ENCODE measurements at regions of chr11 and their contacts with region 1.

Region 1: GRCh38 chr11:118207079-118207478 is 17.7 kb downstream of the JAML start:
- DNase-seq: no peak
- H3K4me3 Mint-ChIP-seq: no peak overlapping the region
- H3K27ac Mint-ChIP-seq: peak overlapping the region; percentile 90
- H3K4me1 Mint-ChIP-seq: peaks cover 63% of the 10 kb centered on the region
- H3K27me3 Mint-ChIP-seq: no peaks in the 10 kb centered on the region

Region 2: DNA sequence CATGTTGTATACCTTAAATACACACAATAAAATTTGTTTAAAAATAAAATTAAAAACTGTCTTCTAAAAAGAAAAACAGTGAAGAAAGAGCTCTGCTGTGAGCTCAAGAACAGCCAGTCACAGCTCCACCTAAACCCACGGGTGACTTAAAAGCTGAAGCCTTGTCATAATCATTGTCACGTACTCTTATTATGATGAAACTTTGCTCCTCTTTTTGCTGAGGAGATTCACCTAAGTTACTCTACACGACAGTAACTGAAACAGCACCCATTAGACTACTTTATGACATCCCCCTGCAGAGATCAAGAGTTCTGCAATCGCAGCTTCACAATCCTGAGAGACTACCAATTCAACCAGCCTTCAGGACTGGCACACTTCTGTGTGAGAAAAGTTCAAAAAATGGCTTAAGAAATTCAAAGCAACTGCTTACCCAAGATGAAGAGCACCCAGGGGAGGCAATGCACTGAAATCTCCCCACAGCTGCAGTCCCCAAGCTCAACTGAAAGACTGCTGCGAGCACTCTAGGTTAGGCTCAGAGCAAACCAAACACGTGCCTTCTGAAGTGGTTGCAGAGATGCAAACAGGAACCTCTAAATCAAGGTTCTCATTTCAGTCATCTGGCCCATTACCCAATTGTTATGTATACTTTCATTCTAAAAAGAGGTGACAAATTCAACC is 17.6 kb after region 1 on chr11 and contains the start of gene JAML:
- CTCF ChIA-PET with region 1: interaction called, 10 read pairs
- POLR2A ChIA-PET with region 1: no interaction called
- DNase-seq: peak; percentile 88
- H3K4me3 Mint-ChIP-seq: peak within 1 kb of the TSS; percentile 85
- H3K27ac Mint-ChIP-seq: no peak within 1 kb of the TSS
- H3K4me1 Mint-ChIP-seq: peaks cover 73% of the 10 kb centered on the region
- H3K27me3 Mint-ChIP-seq: no peaks in the 10 kb centered on the region
- total RNA-seq, gene JAML: 117 to 122 TPM